PC-9 (cell line): ENCODE measurements at regions of chr1 and their contacts with region 1.

Region 1: DNA sequence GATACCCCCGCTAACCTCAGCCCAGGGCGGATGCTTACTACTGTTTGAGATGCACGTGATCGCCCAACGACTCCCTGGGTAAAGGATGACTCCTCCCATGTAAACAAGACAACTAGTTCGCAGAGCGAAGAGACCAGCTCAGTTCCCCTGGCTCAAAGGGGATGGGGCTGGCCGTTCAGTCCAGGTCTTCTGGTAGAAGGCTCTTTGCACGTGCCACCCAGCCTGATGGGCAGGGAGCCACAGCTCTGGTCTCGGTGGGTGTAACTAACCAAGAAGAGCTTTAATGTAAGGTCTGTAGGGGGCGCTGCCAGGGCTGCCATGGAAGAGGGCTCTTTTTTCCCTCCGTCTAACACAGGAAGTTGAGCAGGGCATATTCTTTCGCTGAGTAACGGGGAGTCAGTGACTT is 49.4 kb upstream of the PARP1 start:
- DNase-seq: no peak
- H3K4me3 ChIP-seq: no peak overlapping the region
- H3K27ac ChIP-seq: no peak overlapping the region
- H3K4me1 ChIP-seq: no peaks in the 10 kb centered on the region
- H3K27me3 ChIP-seq: peaks cover 36% of the 10 kb centered on the region
- CTCF ChIP-seq: no peak

Region 2: GRCh38 chr1:227401562-227402342 is 944.4 kb after region 1 on chr1:
- CTCF ChIA-PET with region 1: interaction called, 26 read pairs
- POLR2A ChIA-PET with region 1: no interaction called
- intact Hi-C with region 1: no loop called
- DNase-seq: peak in 1 of 2 experiments; percentile 6
- H3K4me3 ChIP-seq: no peak overlapping the region
- H3K27ac ChIP-seq: no peak overlapping the region
- H3K4me1 ChIP-seq: no peaks in the 10 kb centered on the region
- H3K27me3 ChIP-seq: no peaks in the 10 kb centered on the region
- CTCF ChIP-seq: no peak